OCI-LY7 (cell line): ENCODE measurements at regions of chr6 and their contacts with region 1.

Region 1: GRCh38 chr6:70667711-70668498 is at the start of gene SMAP1:
- DNase-seq: peak; percentile 93
- H3K4me3 ChIP-seq: peak within 1 kb of the TSS; percentile 91
- H3K27ac ChIP-seq: peak within 1 kb of the TSS; percentile 64
- H3K4me1 ChIP-seq: peaks cover 19% of the 10 kb centered on the region
- CTCF ChIP-seq: no peak
- total RNA-seq, gene SMAP1: 10.9 and 15.1 TPM in 2 replicates

Region 2: GRCh38 chr6:70289299-70289698 is 378.6 kb before region 1 on chr6:
- CTCF ChIA-PET with region 1: no interaction called
- POLR2A ChIA-PET with region 1: no interaction called
- intact Hi-C with region 1: no loop called
- DNase-seq: no peak
- H3K4me3 ChIP-seq: no peak overlapping the region
- H3K27ac ChIP-seq: no peak overlapping the region
- H3K4me1 ChIP-seq: no peaks in the 10 kb centered on the region
- CTCF ChIP-seq: peak; percentile 32; the same call in 1 of the 2 replicates

Region 3: DNA sequence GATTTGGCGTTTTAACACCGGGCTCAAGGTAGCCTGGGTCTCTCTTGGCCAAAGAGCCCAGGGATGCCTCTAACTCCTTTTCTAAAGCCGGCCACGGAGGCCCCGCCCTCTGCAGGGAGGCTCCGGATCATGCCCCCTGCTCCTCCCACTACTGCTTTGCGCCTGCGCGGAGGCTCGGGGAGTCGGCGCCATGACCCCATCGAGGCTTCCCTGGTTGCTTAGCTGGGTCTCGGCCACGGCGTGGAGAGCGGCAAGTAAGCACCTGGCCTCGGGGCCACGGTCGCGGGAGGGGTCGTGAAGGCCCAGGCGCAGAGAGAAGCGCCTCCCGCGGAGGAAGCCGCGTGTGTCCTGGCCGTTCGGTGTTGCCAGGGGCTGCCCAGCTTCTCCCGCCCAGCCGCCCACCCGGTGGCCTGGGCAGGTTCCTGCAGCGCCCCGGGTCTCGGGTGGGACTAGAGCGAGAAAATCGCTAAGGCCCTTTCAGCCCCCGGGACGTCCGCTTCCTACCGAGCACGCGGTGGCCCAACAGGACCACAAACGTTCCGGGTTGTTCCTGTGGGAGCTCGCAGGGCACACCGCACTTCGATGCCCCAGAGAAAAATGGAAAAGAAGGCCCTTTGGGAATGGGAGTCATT is 101.0 kb before region 1 on chr6 and contains the start of gene SDHAF4:
- CTCF ChIA-PET with region 1: no interaction called
- POLR2A ChIA-PET with region 1: interaction called, 12 read pairs
- intact Hi-C with region 1: loop called (anchors 2 kb)
- DNase-seq: peak; percentile 91
- H3K4me3 ChIP-seq: peak within 1 kb of the TSS; percentile 90
- H3K27ac ChIP-seq: peak within 1 kb of the TSS; percentile 44
- H3K4me1 ChIP-seq: peaks cover 5% of the 10 kb centered on the region
- CTCF ChIP-seq: 0 out of 2 replicates have a peak, but pooled peaks have one; percentile 19
- total RNA-seq, gene SDHAF4: 9.6 and 10.4 TPM in 2 replicates

Region 4: DNA sequence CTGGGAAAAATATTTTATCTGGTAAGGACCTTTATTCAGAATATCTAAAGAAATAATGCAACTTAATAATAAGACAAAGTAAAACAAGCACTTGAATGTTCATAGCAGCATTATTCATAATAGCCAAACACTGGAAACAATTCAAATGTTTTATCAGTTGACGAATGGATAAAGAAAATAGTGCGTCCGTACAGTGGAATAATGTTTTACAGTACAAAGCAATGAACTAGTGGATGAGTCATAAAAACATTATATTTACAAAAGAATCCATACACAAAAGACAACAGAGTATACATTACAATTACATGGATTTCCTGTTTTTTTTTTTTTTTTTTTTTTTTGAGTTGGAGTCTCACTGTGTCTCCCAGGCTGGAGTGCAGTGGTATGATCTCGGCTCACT is 12.5 kb after region 1 on chr6:
- CTCF ChIA-PET with region 1: interaction called, 3 read pairs
- POLR2A ChIA-PET with region 1: interaction called, 16 read pairs
- intact Hi-C with region 1: no loop called
- DNase-seq: no peak
- H3K4me3 ChIP-seq: no peak overlapping the region
- H3K27ac ChIP-seq: no peak overlapping the region
- H3K4me1 ChIP-seq: no peaks in the 10 kb centered on the region
- CTCF ChIP-seq: no peak